ENCODE measurements at regions of chr19 and their contacts with region 1.

Region 1: DNA sequence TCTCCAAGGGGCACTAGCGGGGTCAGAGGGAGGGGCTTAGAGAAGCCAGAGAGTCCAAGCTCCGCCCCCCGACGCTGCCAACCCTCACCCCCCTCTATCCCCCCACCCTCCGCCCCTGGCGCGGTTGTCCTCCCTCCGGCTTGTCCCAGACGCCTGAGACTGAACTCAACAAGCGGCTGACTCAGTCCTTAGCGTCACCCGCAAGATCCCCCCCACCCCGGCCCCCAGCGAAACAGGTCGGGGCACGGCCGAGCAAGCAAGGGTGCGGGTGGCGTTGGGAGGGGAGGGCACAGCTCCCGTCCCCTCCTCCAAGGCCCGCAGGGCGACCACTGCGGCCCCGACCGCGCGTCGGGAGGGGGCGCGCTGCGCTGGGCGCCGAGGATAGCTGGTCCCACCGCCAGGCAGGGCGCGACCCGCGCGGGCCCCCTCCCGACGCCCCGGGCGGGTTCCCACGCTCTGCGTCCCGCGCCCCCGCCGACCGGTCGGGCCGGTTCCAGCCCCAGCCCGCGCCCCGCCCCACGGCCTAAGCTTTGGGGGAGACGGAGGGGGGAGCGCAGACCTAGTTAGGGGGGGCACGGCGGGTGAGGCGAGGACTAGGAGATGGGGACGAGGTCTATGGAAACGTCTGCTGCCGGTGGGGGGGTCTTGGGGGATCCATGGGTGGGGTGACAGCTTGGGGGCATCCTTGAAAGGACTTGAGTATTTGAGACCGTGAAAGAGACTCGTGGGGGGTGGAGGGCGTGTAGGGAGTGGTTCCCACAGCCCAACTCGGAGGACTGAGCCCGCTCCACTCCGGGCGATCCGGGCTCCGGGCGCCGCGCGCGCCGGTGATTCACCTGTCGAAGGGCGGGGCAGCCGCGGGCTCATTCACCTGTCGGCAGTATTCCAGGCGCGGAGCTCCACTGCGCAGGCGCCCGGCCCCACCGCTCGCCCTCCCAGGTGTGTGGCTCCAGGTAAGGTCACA is 5.1 kb downstream of the NOTCH3 start:
- DNase-seq: no peak
- H3K4me3 ChIP-seq: no peak overlapping the region
- H3K27ac ChIP-seq: no peak overlapping the region
- H3K4me1 ChIP-seq: peaks cover 21% of the 10 kb centered on the region
- CTCF ChIP-seq: no peak

Region 2: GRCh38 chr19:15222738-15223648 is 27.3 kb after region 1 on chr19:
- CTCF ChIA-PET with region 1: no interaction called
- POLR2A ChIA-PET with region 1: no interaction called
- intact Hi-C with region 1: no loop called
- DNase-seq: peak; percentile 95
- H3K4me3 ChIP-seq: peak overlapping the region; percentile 62
- H3K27ac ChIP-seq: no peak overlapping the region
- H3K4me1 ChIP-seq: peaks cover 11% of the 10 kb centered on the region
- CTCF ChIP-seq: no peak

Region 3: DNA sequence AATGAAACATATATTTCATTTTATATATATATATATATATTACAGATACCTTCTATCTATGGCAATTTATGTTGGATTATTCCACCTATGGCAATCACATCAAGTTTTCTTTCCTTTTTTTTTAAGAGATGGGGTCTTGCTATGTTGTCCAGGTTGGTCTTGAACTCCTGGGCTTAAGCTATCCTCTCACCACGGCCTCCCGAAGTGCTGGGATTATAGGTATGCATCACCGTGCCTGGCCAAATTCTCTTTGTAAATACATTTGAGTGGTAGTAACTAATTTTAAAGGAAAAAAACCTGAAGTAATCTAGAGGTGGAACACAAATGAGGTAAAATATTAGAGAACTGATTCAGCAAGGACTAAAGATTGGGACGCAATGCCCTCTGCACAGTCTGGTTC is 158.3 kb after region 1 on chr19:
- CTCF ChIA-PET with region 1: no interaction called
- POLR2A ChIA-PET with region 1: no interaction called
- intact Hi-C with region 1: no loop called
- DNase-seq: no peak
- H3K4me3 ChIP-seq: no peak overlapping the region
- H3K27ac ChIP-seq: no peak overlapping the region
- H3K4me1 ChIP-seq: no peaks in the 10 kb centered on the region
- CTCF ChIP-seq: no peak

Region 4: DNA sequence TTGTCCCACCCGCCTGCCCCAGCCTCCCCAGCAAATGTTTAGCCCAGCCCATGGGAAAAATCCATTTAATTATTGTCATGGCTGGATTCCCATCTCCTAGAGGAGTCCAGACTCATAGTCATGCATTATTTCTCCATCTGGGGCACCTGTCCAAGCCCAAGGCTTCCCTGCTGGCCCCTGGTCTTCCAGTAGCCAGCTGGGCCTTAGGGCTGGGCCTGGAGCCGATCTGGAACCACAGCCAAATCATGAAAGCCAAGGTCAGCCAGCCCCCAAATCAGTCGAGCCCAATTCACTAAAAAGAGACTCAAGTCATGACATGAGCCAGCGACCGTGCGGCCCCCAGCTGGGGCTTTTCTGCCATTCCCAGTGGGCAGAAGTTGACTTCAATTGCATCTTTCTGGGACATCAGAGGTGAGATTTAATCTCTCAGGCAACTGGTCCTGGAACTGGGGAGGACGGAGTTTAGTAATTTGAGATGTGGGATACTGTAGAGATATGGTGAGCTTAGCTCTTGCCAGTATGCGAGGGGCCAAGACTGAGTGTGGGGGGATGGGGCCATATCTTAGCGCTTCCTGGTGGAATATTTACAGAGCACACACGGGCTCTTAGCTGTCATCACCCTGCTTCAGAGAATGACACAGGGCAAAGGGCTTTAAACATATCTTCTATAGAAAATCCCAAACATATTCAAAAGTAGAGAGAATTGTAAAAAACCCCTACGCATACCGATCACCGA is 293.0 kb after region 1 on chr19:
- CTCF ChIA-PET with region 1: interaction called, 11 read pairs
- POLR2A ChIA-PET with region 1: no interaction called
- intact Hi-C with region 1: no loop called
- DNase-seq: no peak
- H3K4me3 ChIP-seq: no peak overlapping the region
- H3K27ac ChIP-seq: no peak overlapping the region
- H3K4me1 ChIP-seq: no peaks in the 10 kb centered on the region
- CTCF ChIP-seq: no peak

Measured in OCI-LY7 (cell line).